PC-9 (cell line): ENCODE measurements at regions of chr11 and their contacts with region 1.

Region 1: DNA sequence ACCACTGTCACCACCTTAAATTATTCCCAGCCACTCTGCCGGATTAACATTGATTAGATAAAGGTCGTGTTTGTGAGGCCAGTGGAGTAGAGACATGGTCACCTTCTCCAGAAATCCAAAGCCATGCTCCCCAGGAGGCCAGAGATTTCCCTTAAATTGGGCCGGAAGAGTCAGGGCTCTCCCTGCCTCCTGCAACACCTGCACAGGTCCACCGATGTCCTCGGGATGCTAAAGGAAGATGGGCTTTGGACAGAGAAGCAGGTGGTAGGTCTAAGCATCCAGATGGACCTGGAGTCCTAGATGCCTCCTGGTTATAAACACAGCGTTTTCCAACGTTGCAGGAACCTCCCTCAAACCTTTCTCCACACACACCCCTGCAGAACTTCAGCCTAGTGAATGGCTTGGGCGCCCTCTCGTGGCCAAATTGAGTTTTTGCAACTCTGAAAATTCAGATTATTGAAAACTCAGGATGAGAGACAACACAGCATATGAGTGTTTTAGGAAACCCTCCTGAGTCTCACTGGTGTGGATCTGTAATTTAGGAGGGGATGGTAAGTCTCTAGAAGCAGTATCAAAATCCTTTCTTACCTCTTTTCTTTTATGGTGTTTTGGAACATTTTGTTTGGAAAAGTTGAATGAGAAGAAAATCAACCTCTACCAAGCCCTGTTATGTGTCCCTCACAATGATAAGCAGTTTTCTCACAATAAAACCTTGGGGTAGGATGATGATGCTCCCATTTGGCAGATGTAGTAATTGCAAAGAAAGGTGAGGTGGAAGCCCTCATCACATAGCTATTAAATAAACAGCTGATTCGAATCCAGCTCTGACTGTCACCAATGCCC is 109.6 kb downstream of the RRAS2 start:
- DNase-seq: peak in 1 of 2 experiments; percentile 31
- H3K4me3 ChIP-seq: no peak overlapping the region
- H3K27ac ChIP-seq: no peak overlapping the region
- H3K4me1 ChIP-seq: no peaks in the 10 kb centered on the region
- H3K27me3 ChIP-seq: no peaks in the 10 kb centered on the region
- CTCF ChIP-seq: peak; percentile 90

Region 2: DNA sequence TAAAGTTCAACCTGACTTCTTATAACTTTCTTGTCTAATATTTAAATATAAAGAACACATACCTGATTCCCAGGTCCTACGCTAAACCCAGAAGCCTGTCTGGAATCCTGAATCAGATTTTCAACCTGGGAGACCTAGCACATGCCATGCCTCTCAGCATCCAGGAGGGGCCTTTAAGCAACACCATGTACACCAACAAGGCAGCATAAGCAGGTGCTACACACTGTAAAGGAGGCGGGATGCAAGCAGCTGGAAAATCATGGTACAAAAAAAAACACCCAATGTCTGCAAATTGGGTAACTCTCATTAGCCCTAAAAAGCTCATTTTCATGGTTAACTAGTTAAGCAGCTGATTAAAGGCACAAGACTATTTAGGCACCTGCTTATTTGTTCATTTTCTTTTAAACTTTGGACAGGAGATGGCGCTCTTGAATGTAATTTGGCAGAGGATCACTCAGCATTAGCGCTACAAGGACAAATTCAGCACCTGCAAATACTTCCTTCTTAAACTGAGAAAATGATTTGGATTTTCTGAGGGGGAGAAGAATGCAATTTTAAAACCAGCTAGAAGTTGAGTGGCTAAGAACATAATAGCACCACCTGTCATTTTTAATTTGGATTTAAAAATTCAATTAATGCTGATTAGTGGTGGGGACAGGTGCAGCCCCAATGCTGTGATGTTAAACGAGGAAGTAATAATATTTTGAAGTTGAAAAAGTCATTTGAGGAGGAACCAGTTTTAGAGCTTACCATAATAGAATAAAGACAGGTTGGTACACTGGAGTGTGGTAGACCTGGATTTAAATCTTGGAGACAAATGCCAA is 476.9 kb before region 1 on chr11:
- CTCF ChIA-PET with region 1: no interaction called
- POLR2A ChIA-PET with region 1: no interaction called
- intact Hi-C with region 1: loop called (anchors 1 kb)
- DNase-seq: peak; percentile 12 to 68
- H3K4me3 ChIP-seq: no peak overlapping the region
- H3K27ac ChIP-seq: no peak overlapping the region
- H3K4me1 ChIP-seq: no peaks in the 10 kb centered on the region
- H3K27me3 ChIP-seq: no peaks in the 10 kb centered on the region
- CTCF ChIP-seq: peak; percentile 74

Region 3: GRCh38 chr11:13955971-13956421 is 293.3 kb before region 1 on chr11:
- CTCF ChIA-PET with region 1: no interaction called
- POLR2A ChIA-PET with region 1: no interaction called
- intact Hi-C with region 1: loop called (anchors 1 kb)
- DNase-seq: peak in 1 of 2 experiments; percentile 19
- H3K4me3 ChIP-seq: no peak overlapping the region
- H3K27ac ChIP-seq: no peak overlapping the region
- H3K4me1 ChIP-seq: no peaks in the 10 kb centered on the region
- H3K27me3 ChIP-seq: no peaks in the 10 kb centered on the region
- CTCF ChIP-seq: peak; percentile 89

Region 4: DNA sequence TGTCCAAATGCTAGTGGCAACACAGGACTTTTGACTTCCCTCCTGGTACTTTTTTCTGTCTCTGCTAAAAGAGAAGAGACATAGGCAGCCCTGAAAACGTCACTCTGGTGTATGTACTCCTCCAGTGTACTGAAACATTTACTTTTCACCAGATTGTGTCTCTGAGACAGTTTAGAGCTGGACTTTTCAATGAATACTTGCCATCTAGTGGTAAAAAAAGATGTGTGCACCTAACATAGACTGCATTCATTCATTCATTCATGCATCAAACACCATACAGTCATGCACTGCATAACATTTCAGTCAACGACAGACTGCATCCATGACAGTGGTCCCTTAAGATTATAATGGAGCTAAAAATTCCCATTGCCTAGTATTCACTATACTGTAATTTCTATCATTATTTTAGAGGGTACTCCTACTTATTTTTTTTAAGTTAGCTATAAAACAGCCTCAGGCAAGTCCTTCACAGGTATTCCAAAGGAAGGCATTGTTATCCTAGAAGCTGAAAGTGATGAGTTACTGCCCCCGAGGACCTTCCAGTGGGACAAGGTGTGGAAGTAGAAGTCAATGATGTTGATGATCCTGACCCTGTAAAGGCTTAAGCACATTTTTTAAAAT is 100.6 kb before region 1 on chr11:
- CTCF ChIA-PET with region 1: no interaction called
- POLR2A ChIA-PET with region 1: no interaction called
- intact Hi-C with region 1: loop called (anchors 5 kb)
- DNase-seq: peak in 1 of 2 experiments; percentile 49
- H3K4me3 ChIP-seq: no peak overlapping the region
- H3K27ac ChIP-seq: no peak overlapping the region
- H3K4me1 ChIP-seq: no peaks in the 10 kb centered on the region
- H3K27me3 ChIP-seq: no peaks in the 10 kb centered on the region
- CTCF ChIP-seq: peak; percentile 66